Sigmoid colon (tissue), 7 donors: ENCODE measurements at regions of chr9 and their contacts with region 1.

Region 1: DNA sequence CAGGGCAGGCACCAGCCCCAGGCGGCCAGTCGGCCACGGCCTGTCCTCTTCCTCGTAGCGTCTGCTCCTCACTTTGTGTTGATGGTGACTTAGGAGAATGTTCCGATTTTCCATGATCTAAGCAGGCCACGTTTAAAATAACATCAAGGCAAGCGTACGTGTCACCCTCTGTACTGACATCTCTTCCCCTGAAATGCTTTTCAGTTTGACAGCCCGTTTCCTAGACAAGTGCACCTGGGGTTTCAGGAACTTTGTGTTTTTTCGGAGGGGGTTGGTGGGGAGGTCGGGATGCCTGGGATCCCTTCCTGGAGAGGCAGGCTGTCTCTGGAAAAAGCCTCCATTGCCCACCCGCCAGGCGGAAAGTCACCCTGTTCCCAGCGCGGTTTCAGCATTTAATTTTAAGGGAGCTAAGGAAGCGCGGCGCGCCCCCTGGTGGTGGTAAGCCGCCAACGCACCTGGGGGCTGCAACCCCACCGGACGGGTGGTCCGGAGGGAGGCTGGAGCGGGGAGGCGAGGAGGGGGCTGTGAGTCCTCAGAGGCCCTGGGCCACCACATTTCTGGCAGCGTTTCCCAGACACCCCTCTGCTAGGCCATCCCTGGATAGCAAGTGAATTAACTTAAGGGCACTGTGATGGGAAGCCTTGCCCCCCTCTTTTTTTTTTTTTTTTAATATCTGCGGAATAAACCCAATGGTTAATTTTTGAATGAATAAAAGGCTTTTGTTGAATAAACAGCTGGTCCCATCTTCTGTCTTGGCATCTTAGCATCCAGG is 29.5 kb upstream of the HMCN2 start:
- DNase-seq: peak; percentile 86
- H3K4me3 ChIP-seq: no peak overlapping the region
- H3K27ac ChIP-seq: peak overlapping the region; percentile 75 to 92 (median 82)
- H3K4me1 ChIP-seq: peaks cover 0 to 54% (median 45%) of the 10 kb centered on the region in 4 donors
- H3K27me3 ChIP-seq: no peaks in the 10 kb centered on the region
- CTCF ChIP-seq: peak; percentile 97 to 100 (median 100)
- EP300 ChIP-seq: peak in 2 of 4 donors; percentile 47
- POLR2A ChIP-seq: no peak

Region 2: DNA sequence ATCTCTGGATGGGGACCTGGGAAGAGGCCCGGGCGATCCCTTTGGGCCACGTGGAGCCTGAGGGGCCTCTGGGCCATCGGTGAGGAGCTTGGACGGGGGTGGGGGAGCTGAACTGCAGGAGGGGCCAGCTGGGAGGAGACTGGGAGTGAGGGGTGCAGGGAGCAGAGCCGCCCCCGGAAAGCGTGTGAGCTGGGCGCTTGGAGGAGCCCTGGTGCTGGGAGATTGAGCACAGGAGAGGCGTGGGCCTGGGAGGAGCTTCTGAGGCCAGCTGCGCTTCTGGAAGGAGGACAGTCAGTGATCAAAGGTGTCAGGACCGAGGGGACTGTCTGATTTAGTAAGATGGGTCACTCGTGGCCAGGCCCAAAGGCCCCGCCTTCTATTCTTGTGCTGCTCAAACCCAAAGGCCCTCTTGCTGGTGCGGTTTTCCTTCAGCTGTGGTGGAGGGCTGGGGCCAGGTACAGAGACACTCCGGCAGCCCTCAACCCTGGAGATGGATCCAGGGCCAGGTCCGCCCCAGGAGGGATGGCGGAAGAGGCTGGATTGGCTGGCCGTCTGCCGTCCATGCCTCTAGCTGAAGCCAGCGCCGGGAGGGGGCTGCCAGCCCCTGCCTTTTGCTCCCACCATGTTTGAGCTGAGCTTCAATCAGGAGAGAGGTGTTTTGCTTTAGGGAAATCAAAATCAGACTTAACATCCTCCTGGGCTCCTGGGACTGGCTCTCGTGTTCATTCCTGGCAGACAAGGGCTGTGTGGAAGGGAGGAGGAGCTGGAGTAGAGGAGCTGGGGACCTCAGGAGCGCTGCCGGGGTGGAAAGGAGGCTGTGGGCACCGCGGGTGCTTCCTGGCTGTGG is 42.3 kb before region 1 on chr9:
- intact Hi-C with region 1: loop called (anchors 5 kb)
- DNase-seq: no peak
- H3K4me3 ChIP-seq: peak overlapping the region in 2 of 4 donors; percentile 15 to 20
- H3K27ac ChIP-seq: peak overlapping the region; percentile 94 to 99 (median 96)
- H3K4me1 ChIP-seq: peaks cover 2 to 99% (median 98%) of the 10 kb centered on the region in 4 donors
- H3K27me3 ChIP-seq: no peaks in the 10 kb centered on the region
- CTCF ChIP-seq: no peak
- EP300 ChIP-seq: no peak
- POLR2A ChIP-seq: no peak